Activated CD4-positive, alpha-beta memory T cell treated with anti-CD3 and anti-CD28 coated beads, Interleukin-2, amount 10 ng/mL, durations not matched to agents 7 days and 5 days (primary cell): ENCODE measurements at regions of chr14 and their contacts with region 1.

Region 1: GRCh38 chr14:35883677-35884293 is 57.6 kb downstream of the BRMS1L start:
- DNase-seq: no peak
- H3K4me3 Mint-ChIP-seq: no peak overlapping the region
- H3K27ac Mint-ChIP-seq: no peak overlapping the region
- H3K4me1 Mint-ChIP-seq: no peaks in the 10 kb centered on the region
- H3K27me3 Mint-ChIP-seq: peaks cover 8% of the 10 kb centered on the region

Region 2: GRCh38 chr14:35944847-35945246 is 61.1 kb after region 1 on chr14:
- CTCF ChIA-PET with region 1: interaction called, 11 read pairs
- POLR2A ChIA-PET with region 1: no interaction called
- DNase-seq: no peak
- H3K4me3 Mint-ChIP-seq: no peak overlapping the region
- H3K27ac Mint-ChIP-seq: no peak overlapping the region
- H3K4me1 Mint-ChIP-seq: peaks cover 6% of the 10 kb centered on the region
- H3K27me3 Mint-ChIP-seq: no peaks in the 10 kb centered on the region

Region 3: DNA sequence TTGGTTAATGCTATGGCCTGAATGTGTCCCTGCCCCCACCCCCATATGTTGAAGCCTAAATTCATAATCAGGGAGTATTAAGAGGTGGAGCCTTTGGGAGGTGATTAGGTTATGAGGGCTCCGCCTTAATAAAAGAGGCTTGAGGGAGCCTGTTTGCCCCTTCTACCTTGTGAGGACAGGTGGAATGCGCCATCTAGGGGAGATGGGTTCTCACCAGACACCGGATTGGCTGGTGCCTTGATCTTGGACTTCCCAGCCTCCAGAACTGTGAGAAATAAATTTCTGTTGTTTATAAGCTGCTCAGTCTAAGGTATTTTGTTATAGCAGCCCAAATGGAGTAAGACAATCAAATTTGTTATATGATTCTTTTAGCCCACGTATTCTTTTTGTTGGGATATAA is 144.4 kb after region 1 on chr14:
- CTCF ChIA-PET with region 1: interaction called, 11 read pairs
- POLR2A ChIA-PET with region 1: interaction called, 4 read pairs
- DNase-seq: no peak
- H3K4me3 Mint-ChIP-seq: no peak overlapping the region
- H3K27ac Mint-ChIP-seq: no peak overlapping the region
- H3K4me1 Mint-ChIP-seq: no peaks in the 10 kb centered on the region
- H3K27me3 Mint-ChIP-seq: peaks cover 2% of the 10 kb centered on the region

Region 4: DNA sequence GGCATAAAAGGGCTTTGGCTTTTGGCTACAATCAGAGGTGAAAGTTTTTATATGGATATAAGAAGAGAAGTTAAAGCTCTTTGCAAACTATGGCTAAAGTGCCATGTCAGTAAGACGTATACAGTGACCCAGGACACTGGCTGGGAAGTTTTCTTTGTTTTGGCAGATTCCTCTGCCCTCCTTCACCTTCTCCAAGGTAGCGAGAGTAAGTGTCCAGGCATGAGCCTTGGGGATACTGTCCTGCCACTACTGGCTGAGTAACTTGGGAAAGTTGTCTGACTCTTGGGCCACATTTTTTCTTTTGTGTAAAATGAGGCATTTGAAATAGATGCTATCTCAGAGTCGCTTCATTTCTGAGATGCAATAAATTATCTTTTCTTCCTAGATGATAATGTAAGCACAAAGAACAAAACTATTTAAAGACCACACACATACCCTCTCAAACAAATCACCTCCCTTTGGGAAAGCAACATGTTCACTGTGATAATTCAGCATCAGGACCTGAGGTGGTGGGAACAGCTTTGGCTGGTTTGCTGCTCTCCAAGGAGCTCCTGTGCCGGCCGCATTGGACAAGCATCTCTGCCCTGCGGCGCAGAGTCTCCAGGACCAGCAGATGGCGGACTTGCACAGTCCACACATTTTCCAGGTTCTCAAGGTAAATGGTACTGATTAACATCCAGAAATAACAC is 186.4 kb after region 1 on chr14:
- CTCF ChIA-PET with region 1: interaction called, 56 read pairs
- POLR2A ChIA-PET with region 1: no interaction called
- DNase-seq: peak; percentile 48
- H3K4me3 Mint-ChIP-seq: no peak overlapping the region
- H3K27ac Mint-ChIP-seq: no peak overlapping the region
- H3K4me1 Mint-ChIP-seq: no peaks in the 10 kb centered on the region
- H3K27me3 Mint-ChIP-seq: no peaks in the 10 kb centered on the region

Region 5: DNA sequence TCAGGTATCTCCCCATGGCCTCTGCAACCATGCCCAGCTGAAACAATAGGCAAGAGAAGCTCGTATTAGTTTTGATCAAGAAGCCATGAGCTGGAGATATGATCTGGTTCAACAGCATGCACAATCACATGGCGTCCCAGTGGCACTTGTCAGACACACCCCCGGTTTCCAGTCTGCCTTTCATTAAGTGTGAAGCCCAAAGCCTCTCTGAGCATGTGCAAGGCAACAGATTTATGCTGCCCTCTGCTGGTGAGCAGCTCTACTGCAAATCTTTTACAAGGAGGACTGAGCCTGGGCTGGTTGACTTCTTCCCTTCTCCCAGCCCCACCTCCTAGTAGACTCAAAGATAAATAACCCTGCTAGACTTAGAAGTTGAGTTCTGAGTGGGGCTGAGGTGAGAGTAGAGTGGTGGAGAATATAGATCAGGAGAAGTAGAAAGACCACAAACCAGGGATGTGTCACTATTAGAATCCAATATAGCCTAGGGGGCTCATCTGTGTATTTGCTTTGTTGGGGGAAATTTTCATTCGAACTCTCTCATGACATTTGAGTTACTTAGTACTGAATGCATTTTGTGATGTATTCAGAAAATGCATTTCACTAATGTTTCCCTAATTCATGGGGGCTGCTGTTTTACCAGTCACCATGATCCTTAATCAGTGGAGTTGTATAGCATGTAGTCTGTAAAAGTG is 490.3 kb after region 1 on chr14:
- CTCF ChIA-PET with region 1: interaction called, 11 read pairs
- POLR2A ChIA-PET with region 1: no interaction called
- DNase-seq: peak; percentile 74
- H3K4me3 Mint-ChIP-seq: no peak overlapping the region
- H3K27ac Mint-ChIP-seq: no peak overlapping the region
- H3K4me1 Mint-ChIP-seq: no peaks in the 10 kb centered on the region
- H3K27me3 Mint-ChIP-seq: no peaks in the 10 kb centered on the region